ENCODE measurements at regions of chr6 and their contacts with region 1.

Region 1: GRCh38 chr6:150417899-150418826 is 49.4 kb downstream of the IYD start:
- DNase-seq: peak in 3 of 4 experiments; percentile 34 to 68 (median 60)
- ATAC-seq: peak; percentile 93
- H3K4me3 ChIP-seq: 0 out of 2 replicates have a peak overlapping the region, but pooled peaks have one; percentile 3
- H3K27ac ChIP-seq: no peak overlapping the region
- H3K4me1 ChIP-seq: peaks cover 4 to 9% of the 10 kb centered on the region in 2 experiments; a peak in 3 of 5 replicates
- H3K27me3 ChIP-seq: peaks cover 0 to 8% of the 10 kb centered on the region in 2 experiments; a peak in 2 of 5 replicates
- CTCF ChIP-seq: peak; percentile 73 to 91 (median 80)
- EP300 ChIP-seq: peak; percentile 38
- POLR2A ChIP-seq: no peak
- RAD21 ChIP-seq: peak; percentile 86 to 91

Region 2: DNA sequence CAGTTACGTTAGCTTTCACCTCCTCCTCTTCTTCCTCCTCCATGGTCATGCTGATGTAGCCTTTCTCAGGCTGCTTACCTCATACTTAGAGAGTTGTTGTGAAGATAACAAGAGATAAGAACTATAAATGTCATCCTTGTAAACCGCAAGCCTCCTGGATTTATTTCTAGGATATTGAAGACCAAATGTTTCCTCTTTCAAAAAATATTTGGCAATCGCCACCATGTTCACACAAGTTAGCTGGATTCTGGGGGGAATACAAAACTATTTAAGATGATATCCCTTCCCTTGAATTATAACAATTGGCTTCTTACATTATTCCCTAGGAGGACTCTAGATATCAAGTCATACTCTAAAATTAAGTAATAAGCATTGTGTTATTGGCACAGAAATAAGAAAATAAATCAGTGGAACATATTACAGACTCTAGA is 81.7 kb after region 1 on chr6:
- CTCF ChIA-PET with region 1: no interaction called
- POLR2A ChIA-PET with region 1: no interaction called
- in situ Hi-C with region 1: no loop called
- intact Hi-C with region 1: loop called (anchors 5 kb)
- DNase-seq: no peak
- ATAC-seq: no peak
- H3K4me3 ChIP-seq: no peak overlapping the region
- H3K27ac ChIP-seq: no peak overlapping the region
- H3K4me1 ChIP-seq: no peaks in the 10 kb centered on the region
- H3K27me3 ChIP-seq: no peaks in the 10 kb centered on the region
- CTCF ChIP-seq: no peak
- EP300 ChIP-seq: no peak
- POLR2A ChIP-seq: no peak
- RAD21 ChIP-seq: no peak

Region 3: GRCh38 chr6:150600301-150601017 is 182.3 kb after region 1 on chr6:
- CTCF ChIA-PET with region 1: no interaction called
- POLR2A ChIA-PET with region 1: no interaction called
- in situ Hi-C with region 1: no loop called
- intact Hi-C with region 1: loop called (anchors 5 kb)
- DNase-seq: peak; percentile 20 to 46 (median 42)
- ATAC-seq: peak; percentile 82
- H3K4me3 ChIP-seq: no peak overlapping the region
- H3K27ac ChIP-seq: no peak overlapping the region
- H3K4me1 ChIP-seq: peaks cover 0 to 12% of the 10 kb centered on the region in 2 experiments; a peak in 1 of 5 replicates
- H3K27me3 ChIP-seq: peaks cover 49 to 61% of the 10 kb centered on the region in 2 experiments
- CTCF ChIP-seq: peak; percentile 19 to 44 (median 35); a peak in 5 of 6 replicates
- EP300 ChIP-seq: no peak
- POLR2A ChIP-seq: no peak
- RAD21 ChIP-seq: no peak

Region 4: GRCh38 chr6:150670311-150670710 is 252.1 kb after region 1 on chr6:
- CTCF ChIA-PET with region 1: no interaction called
- POLR2A ChIA-PET with region 1: no interaction called
- in situ Hi-C with region 1: no loop called
- intact Hi-C with region 1: loop called (anchors 1 kb)
- DNase-seq: no peak
- ATAC-seq: peak; percentile 60; the same call in 2 of the 3 replicates
- H3K4me3 ChIP-seq: no peak overlapping the region
- H3K27ac ChIP-seq: no peak overlapping the region
- H3K4me1 ChIP-seq: no peaks in the 10 kb centered on the region
- H3K27me3 ChIP-seq: peaks cover 0 to 5% of the 10 kb centered on the region in 2 experiments; a peak in 1 of 5 replicates
- CTCF ChIP-seq: peak; percentile 7 to 41 (median 13); a peak in 1 of 6 replicates
- EP300 ChIP-seq: no peak
- POLR2A ChIP-seq: no peak
- RAD21 ChIP-seq: 0 out of 4 replicates have a peak, but pooled peaks of 1 of the 2 experiments have one; percentile 16

Region 5: DNA sequence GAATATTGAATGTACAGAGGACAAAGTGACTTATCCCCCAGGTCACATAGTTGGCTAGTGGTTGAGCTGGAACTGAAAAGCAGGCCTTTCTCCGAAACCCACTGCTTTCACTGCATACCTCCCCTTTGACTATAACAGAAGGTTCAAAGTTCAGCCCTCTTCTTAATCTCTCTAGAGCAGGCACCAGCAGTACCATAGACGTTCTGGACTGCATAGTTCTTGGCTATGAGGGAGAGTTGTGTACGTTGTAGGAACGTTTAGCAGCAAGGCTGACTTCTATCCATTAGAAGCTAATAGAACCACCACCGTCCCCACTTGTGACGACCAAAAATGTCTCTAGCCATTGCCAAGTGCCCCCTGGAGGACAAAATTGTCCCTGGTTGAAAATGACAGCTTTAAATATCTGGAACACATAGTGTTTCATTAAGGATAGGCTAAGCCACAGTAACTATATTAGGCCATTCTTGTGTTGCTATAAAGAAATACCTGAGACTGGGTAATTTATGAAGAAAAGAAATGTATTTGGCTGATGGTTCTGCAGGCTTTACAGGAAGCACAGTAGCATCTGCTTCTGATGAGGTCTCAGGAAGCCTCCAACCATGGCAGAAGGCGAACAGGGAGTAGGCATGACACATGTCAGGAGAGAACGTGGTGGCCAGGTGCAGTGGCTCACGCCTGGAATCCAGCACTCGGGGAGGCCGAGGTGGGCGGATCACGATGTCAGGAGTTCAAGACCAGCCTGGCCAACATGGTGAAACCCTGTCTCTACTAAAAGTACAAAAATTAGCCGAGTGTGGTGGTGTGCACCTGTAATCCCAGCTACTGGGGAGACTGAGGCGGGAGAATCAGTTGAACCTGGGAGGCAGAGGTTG is 323.7 kb after region 1 on chr6:
- CTCF ChIA-PET with region 1: interaction called, 14 read pairs
- POLR2A ChIA-PET with region 1: no interaction called
- in situ Hi-C with region 1: no loop called
- intact Hi-C with region 1: loop called (anchors 2 kb)
- DNase-seq: peak in 2 of 4 experiments; percentile 24 to 31
- ATAC-seq: peak; percentile 67
- H3K4me3 ChIP-seq: no peak overlapping the region
- H3K27ac ChIP-seq: no peak overlapping the region
- H3K4me1 ChIP-seq: no peaks in the 10 kb centered on the region
- H3K27me3 ChIP-seq: peaks cover 26 to 36% of the 10 kb centered on the region in 2 experiments
- CTCF ChIP-seq: peak; percentile 52 to 60 (median 59); a peak in 5 of 6 replicates
- EP300 ChIP-seq: no peak
- POLR2A ChIP-seq: no peak
- RAD21 ChIP-seq: peak; percentile 38 to 64

Region 6: GRCh38 chr6:151339369-151339768 is 921.2 kb after region 1 on chr6:
- CTCF ChIA-PET with region 1: no interaction called
- POLR2A ChIA-PET with region 1: no interaction called
- in situ Hi-C with region 1: no loop called
- intact Hi-C with region 1: loop called (anchors 2 kb)
- DNase-seq: peak in 1 of 4 experiments; percentile 36
- ATAC-seq: no peak; the same call in 1 of the 3 replicates
- H3K4me3 ChIP-seq: no peak overlapping the region
- H3K27ac ChIP-seq: no peak overlapping the region
- H3K4me1 ChIP-seq: peaks cover 0 to 12% of the 10 kb centered on the region in 2 experiments; a peak in 1 of 5 replicates
- H3K27me3 ChIP-seq: peaks cover 38 to 59% of the 10 kb centered on the region in 2 experiments
- CTCF ChIP-seq: no peak
- EP300 ChIP-seq: no peak
- POLR2A ChIP-seq: no peak
- RAD21 ChIP-seq: no peak